CD8-positive, alpha-beta T cell (primary cell): ENCODE measurements at regions of chr13 and their contacts with region 1.

Region 1: DNA sequence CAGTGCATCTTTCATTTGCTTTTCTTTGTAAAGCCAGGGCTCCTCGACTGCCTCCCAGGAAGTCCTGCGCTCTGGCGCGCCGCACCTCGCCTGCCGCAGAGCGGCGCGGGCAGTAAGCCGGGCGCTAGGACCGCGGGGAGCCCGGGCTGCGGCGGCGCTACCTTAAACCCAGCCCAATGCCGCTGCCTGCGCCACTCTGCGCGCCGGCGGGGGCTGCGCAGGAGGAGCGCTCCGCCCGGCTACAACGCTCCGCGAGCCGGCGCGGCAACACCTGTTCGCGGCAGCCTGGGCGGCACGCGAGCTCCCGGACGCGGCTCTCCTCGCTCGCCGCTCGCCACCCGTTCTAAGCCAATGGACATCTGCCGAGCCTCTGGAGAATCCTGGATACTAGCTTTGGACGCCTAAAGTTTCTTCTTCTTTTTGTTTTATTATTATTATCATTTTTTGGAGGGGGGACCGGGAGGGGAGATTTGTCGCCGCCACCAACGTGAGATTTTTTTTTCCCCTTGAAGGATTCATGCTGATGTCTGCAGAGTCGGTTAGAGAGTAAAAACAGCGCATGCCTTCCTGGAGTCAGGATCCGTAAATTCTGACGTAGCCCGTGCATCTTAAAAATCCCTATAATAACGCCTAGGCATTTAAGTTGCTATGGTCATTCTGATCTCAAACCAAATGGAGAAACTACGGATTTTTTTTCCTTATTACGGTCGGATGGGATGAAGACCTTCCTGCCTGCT is at the start of gene FGF9:
- DNase-seq: peak; percentile 57 to 93 (median 78)
- ATAC-seq: peak; percentile 66
- H3K4me3 ChIP-seq: peak within 1 kb of the TSS; percentile 67 to 80
- H3K4me3 Mint-ChIP-seq: peak within 1 kb of the TSS; percentile 88
- H3K27ac ChIP-seq: peak within 1 kb of the TSS; percentile 32 to 56
- H3K27ac Mint-ChIP-seq: peak within 1 kb of the TSS; percentile 88
- H3K4me1 ChIP-seq: peaks cover 30% of the 10 kb centered on the region
- H3K4me1 Mint-ChIP-seq: peaks cover 49% of the 10 kb centered on the region
- H3K27me3 ChIP-seq: peaks cover 0 to 4% of the 10 kb centered on the region in 2 experiments
- H3K27me3 Mint-ChIP-seq: peaks cover 10% of the 10 kb centered on the region
- CTCF ChIP-seq: no peak
- total RNA-seq, gene FGF9: 7.6 to 8.2 TPM

Region 2: DNA sequence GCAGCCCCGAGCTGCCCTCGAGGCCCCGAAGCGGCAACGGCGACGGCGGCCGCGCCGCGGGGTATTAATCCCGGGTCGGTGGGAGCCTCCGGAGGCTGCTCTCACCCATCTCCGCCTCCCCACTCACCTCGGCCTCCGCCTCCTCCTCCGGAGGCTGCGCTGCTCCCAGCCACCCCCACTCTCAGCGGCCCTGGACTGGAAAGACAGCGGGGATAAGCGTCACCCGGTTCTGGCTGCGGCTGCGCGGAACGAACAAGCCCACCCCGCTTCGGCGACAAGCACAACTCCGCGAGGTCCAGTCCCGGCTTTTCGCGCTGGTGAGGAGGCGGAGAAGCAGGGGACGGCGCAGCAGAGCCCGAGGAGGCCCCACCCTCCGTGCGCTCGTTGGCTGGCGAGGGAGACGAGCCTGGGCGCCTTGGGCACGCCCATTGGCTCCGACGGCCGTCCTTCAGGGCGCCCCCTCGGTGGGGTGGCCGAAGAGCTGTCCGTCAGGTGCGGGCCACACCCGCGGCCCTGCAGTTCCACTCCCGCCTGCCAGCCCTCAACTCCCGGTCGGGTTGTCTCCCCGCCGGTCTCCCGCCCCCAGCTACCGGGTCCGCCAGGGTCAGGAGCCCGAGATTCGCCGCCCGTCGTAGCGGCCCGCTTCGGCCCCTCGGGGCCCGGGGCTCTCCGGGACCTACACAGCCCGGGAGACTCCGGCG is 1807.6 kb before region 1 on chr13 and contains the start of gene ZMYM5:
- CTCF ChIA-PET with region 1: no interaction called
- POLR2A ChIA-PET with region 1: interaction called, 3 read pairs
- intact Hi-C with region 1: loop called in 1 of 2 experiments (anchors 5 kb)
- DNase-seq: peak; percentile 85 to 98 (median 95)
- ATAC-seq: peak; percentile 83
- H3K4me3 ChIP-seq: peak within 1 kb of the TSS; percentile 64 to 74
- H3K4me3 Mint-ChIP-seq: peak within 1 kb of the TSS; percentile 90
- H3K27ac ChIP-seq: peak within 1 kb of the TSS; percentile 78 to 97
- H3K27ac Mint-ChIP-seq: peak within 1 kb of the TSS; percentile 97
- H3K4me1 ChIP-seq: peaks cover 25% of the 10 kb centered on the region
- H3K4me1 Mint-ChIP-seq: peaks cover 35% of the 10 kb centered on the region
- H3K27me3 ChIP-seq: no peaks in the 10 kb centered on the region
- H3K27me3 Mint-ChIP-seq: no peaks in the 10 kb centered on the region
- CTCF ChIP-seq: no peak
- total RNA-seq, gene ZMYM5: 25.1 to 25.8 TPM

Region 3: GRCh38 chr13:20703780-20704445 is 967.1 kb before region 1 on chr13:
- CTCF ChIA-PET with region 1: no interaction called
- POLR2A ChIA-PET with region 1: no interaction called
- intact Hi-C with region 1: loop called in 1 of 2 experiments (anchors 10 kb)
- DNase-seq: peak; percentile 56 to 90 (median 76)
- ATAC-seq: peak; percentile 86
- H3K4me3 ChIP-seq: no peak overlapping the region
- H3K4me3 Mint-ChIP-seq: no peak overlapping the region
- H3K27ac ChIP-seq: no peak overlapping the region
- H3K27ac Mint-ChIP-seq: no peak overlapping the region
- H3K4me1 ChIP-seq: peaks cover 11% of the 10 kb centered on the region
- H3K4me1 Mint-ChIP-seq: peaks cover 15% of the 10 kb centered on the region
- H3K27me3 ChIP-seq: peaks cover 0 to 3% of the 10 kb centered on the region in 2 experiments
- H3K27me3 Mint-ChIP-seq: peaks cover 12% of the 10 kb centered on the region
- CTCF ChIP-seq: peak; percentile 31

Region 4: GRCh38 chr13:21176220-21176982 is 494.6 kb before region 1 on chr13 and contains the starts of genes MRPL57 and SKA3:
- CTCF ChIA-PET with region 1: no interaction called
- POLR2A ChIA-PET with region 1: no interaction called
- intact Hi-C with region 1: loop called (anchors 2 to 5 kb)
- DNase-seq: peak; percentile 86 to 97 (median 93)
- ATAC-seq: peak; percentile 97
- H3K4me3 ChIP-seq: peak within 1 kb of the TSS; percentile 83 to 93
- H3K4me3 Mint-ChIP-seq: peak within 1 kb of the TSS; percentile 97
- H3K27ac ChIP-seq: peak within 1 kb of the TSS; percentile 80 to 92
- H3K27ac Mint-ChIP-seq: peak within 1 kb of the TSS; percentile 96
- H3K4me1 ChIP-seq: peaks cover 18% of the 10 kb centered on the region
- H3K4me1 Mint-ChIP-seq: peaks cover 26% of the 10 kb centered on the region
- H3K27me3 ChIP-seq: no peaks in the 10 kb centered on the region
- H3K27me3 Mint-ChIP-seq: no peaks in the 10 kb centered on the region
- CTCF ChIP-seq: no peak
- total RNA-seq, gene MRPL57: 9.8 to 11.1 TPM
- total RNA-seq, gene SKA3: 0.36 to 0.49 TPM

Region 5: GRCh38 chr13:21557995-21558394 is 113.1 kb before region 1 on chr13:
- CTCF ChIA-PET with region 1: no interaction called
- POLR2A ChIA-PET with region 1: no interaction called
- intact Hi-C with region 1: no loop called
- DNase-seq: peak in 2 of 9 experiments; percentile 22 to 36
- ATAC-seq: no peak
- H3K4me3 ChIP-seq: no peak overlapping the region
- H3K4me3 Mint-ChIP-seq: no peak overlapping the region
- H3K27ac ChIP-seq: no peak overlapping the region
- H3K27ac Mint-ChIP-seq: no peak overlapping the region
- H3K4me1 ChIP-seq: no peaks in the 10 kb centered on the region
- H3K4me1 Mint-ChIP-seq: peaks cover 8% of the 10 kb centered on the region
- H3K27me3 ChIP-seq: no peaks in the 10 kb centered on the region
- H3K27me3 Mint-ChIP-seq: no peaks in the 10 kb centered on the region
- CTCF ChIP-seq: peak; percentile 48

Region 6: GRCh38 chr13:21603531-21604448 is 67.3 kb before region 1 on chr13 and contains the start of gene MICU2:
- CTCF ChIA-PET with region 1: interaction called, 4 read pairs
- POLR2A ChIA-PET with region 1: interaction called, 69 read pairs
- intact Hi-C with region 1: loop called (anchors 1 to 2 kb)
- DNase-seq: peak; percentile 91 to 98 (median 96)
- ATAC-seq: peak; percentile 92
- H3K4me3 ChIP-seq: peak within 1 kb of the TSS; percentile 73 to 85
- H3K4me3 Mint-ChIP-seq: peak within 1 kb of the TSS; percentile 84
- H3K27ac ChIP-seq: peak within 1 kb of the TSS; percentile 84 to 97
- H3K27ac Mint-ChIP-seq: peak within 1 kb of the TSS; percentile 94
- H3K4me1 ChIP-seq: peaks cover 24% of the 10 kb centered on the region
- H3K4me1 Mint-ChIP-seq: peaks cover 47% of the 10 kb centered on the region
- H3K27me3 ChIP-seq: no peaks in the 10 kb centered on the region
- H3K27me3 Mint-ChIP-seq: peaks cover 9% of the 10 kb centered on the region
- CTCF ChIP-seq: no peak
- total RNA-seq, gene MICU2: 28.3 to 36.0 TPM

Region 7: GRCh38 chr13:22061351-22061805 is 390.3 kb after region 1 on chr13:
- CTCF ChIA-PET with region 1: interaction called, 3 read pairs
- POLR2A ChIA-PET with region 1: interaction called, 3 read pairs
- intact Hi-C with region 1: loop called (anchors 2 to 5 kb)
- DNase-seq: peak; percentile 20 to 84 (median 54)
- ATAC-seq: peak; percentile 78
- H3K4me3 ChIP-seq: no peak overlapping the region
- H3K4me3 Mint-ChIP-seq: peak overlapping the region; percentile 19
- H3K27ac ChIP-seq: peak overlapping the region; percentile 77 to 90
- H3K27ac Mint-ChIP-seq: peak overlapping the region; percentile 94
- H3K4me1 ChIP-seq: peaks cover 66% of the 10 kb centered on the region
- H3K4me1 Mint-ChIP-seq: peaks cover 80% of the 10 kb centered on the region
- H3K27me3 ChIP-seq: no peaks in the 10 kb centered on the region
- H3K27me3 Mint-ChIP-seq: no peaks in the 10 kb centered on the region
- CTCF ChIP-seq: peak; percentile 20

Region 8: GRCh38 chr13:22278336-22278929 is 607.4 kb after region 1 on chr13:
- CTCF ChIA-PET with region 1: interaction called, 4 read pairs
- POLR2A ChIA-PET with region 1: no interaction called
- intact Hi-C with region 1: loop called in 1 of 2 experiments (anchors 10 kb)
- DNase-seq: peak; percentile 53 to 83 (median 71)
- ATAC-seq: peak; percentile 56
- H3K4me3 ChIP-seq: no peak overlapping the region
- H3K4me3 Mint-ChIP-seq: no peak overlapping the region
- H3K27ac ChIP-seq: no peak overlapping the region
- H3K27ac Mint-ChIP-seq: no peak overlapping the region
- H3K4me1 ChIP-seq: no peaks in the 10 kb centered on the region
- H3K4me1 Mint-ChIP-seq: peaks cover 11% of the 10 kb centered on the region
- H3K27me3 ChIP-seq: no peaks in the 10 kb centered on the region
- H3K27me3 Mint-ChIP-seq: peaks cover 2% of the 10 kb centered on the region
- CTCF ChIP-seq: peak; percentile 44

Region 9: GRCh38 chr13:23074075-23074828 is 1403.2 kb after region 1 on chr13:
- CTCF ChIA-PET with region 1: no interaction called
- POLR2A ChIA-PET with region 1: no interaction called
- intact Hi-C with region 1: no loop called
- DNase-seq: no peak
- ATAC-seq: no peak
- H3K4me3 ChIP-seq: no peak overlapping the region
- H3K4me3 Mint-ChIP-seq: no peak overlapping the region
- H3K27ac ChIP-seq: no peak overlapping the region
- H3K27ac Mint-ChIP-seq: no peak overlapping the region
- H3K4me1 ChIP-seq: no peaks in the 10 kb centered on the region
- H3K4me1 Mint-ChIP-seq: no peaks in the 10 kb centered on the region
- H3K27me3 ChIP-seq: no peaks in the 10 kb centered on the region
- H3K27me3 Mint-ChIP-seq: no peaks in the 10 kb centered on the region
- CTCF ChIP-seq: no peak